ENCODE measurements at regions of chr16 and their contacts with region 1.

Region 1: GRCh38 chr16:30407102-30407803 is at the start of gene ZNF771:
- DNase-seq: peak; percentile 66 to 93 (median 69)
- ATAC-seq: peak; percentile 93
- H3K4me3 ChIP-seq: peak within 1 kb of the TSS; percentile 85
- H3K4me3 Mint-ChIP-seq: peak within 1 kb of the TSS; percentile 87 to 100 (median 97)
- H3K27ac ChIP-seq: peak within 1 kb of the TSS; percentile 74
- H3K27ac Mint-ChIP-seq: peak within 1 kb of the TSS; percentile 83 to 97 (median 95)
- H3K4me1 ChIP-seq: peaks cover 0 to 12% of the 10 kb centered on the region in 2 donors
- H3K4me1 Mint-ChIP-seq: peaks cover 21 to 31% (median 27%) of the 10 kb centered on the region in 7 donors
- H3K27me3 ChIP-seq: no peaks in the 10 kb centered on the region
- H3K27me3 Mint-ChIP-seq: peaks cover 0 to 4% (median 0%) of the 10 kb centered on the region in 5 donors
- total RNA-seq, gene ZNF771: 1.2 to 9.0 (median 4.5) TPM

Region 2: DNA sequence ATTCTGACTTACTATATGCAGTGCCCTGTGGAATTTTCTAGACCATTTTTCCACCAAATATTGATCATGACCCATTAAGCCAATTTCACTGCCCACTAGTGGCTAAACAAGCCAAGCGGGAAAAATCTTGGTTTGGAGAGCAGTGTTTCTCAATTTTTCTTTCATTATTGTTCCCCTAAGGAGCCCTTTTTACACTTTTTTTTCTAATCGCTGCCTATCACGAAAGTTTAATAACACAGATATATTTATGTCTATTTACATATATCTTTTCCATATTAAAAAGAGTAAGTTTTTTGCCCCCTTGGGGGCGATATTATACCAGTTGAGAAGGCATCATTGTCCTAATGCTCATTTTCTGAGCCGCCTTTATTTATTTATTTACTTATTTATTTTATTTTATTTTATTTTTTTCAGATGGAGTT is 365.4 kb before region 1 on chr16:
- CTCF ChIA-PET with region 1: interaction called, 3 read pairs
- POLR2A ChIA-PET with region 1: no interaction called
- intact Hi-C with region 1: loop called in 1 of 2 experiments (anchors 1 kb)
- DNase-seq: peak in 3 of 9 donors; percentile 40 to 44 (median 42)
- ATAC-seq: no peak
- H3K4me3 ChIP-seq: no peak overlapping the region
- H3K4me3 Mint-ChIP-seq: no peak overlapping the region
- H3K27ac ChIP-seq: no peak overlapping the region
- H3K27ac Mint-ChIP-seq: no peak overlapping the region
- H3K4me1 ChIP-seq: no peaks in the 10 kb centered on the region
- H3K4me1 Mint-ChIP-seq: peaks cover 0 to 7% (median 0%) of the 10 kb centered on the region in 7 donors
- H3K27me3 ChIP-seq: no peaks in the 10 kb centered on the region
- H3K27me3 Mint-ChIP-seq: peaks cover 0 to 21% (median 0%) of the 10 kb centered on the region in 5 donors

Region 3: GRCh38 chr16:30112197-30113030 is 294.8 kb before region 1 on chr16:
- CTCF ChIA-PET with region 1: no interaction called
- POLR2A ChIA-PET with region 1: interaction called, 3 read pairs
- intact Hi-C with region 1: loop called in 1 of 2 experiments (anchors 1 kb)
- DNase-seq: peak in 7 of 9 donors; percentile 31 to 76 (median 35)
- ATAC-seq: peak; percentile 60
- H3K4me3 ChIP-seq: no peak overlapping the region
- H3K4me3 Mint-ChIP-seq: no peak overlapping the region
- H3K27ac ChIP-seq: no peak overlapping the region
- H3K27ac Mint-ChIP-seq: peak overlapping the region in 2 of 9 donors; percentile 12 to 38
- H3K4me1 ChIP-seq: no peaks in the 10 kb centered on the region
- H3K4me1 Mint-ChIP-seq: peaks cover 6 to 15% (median 11%) of the 10 kb centered on the region in 7 donors
- H3K27me3 ChIP-seq: no peaks in the 10 kb centered on the region
- H3K27me3 Mint-ChIP-seq: no peaks in the 10 kb centered on the region

Region 4: DNA sequence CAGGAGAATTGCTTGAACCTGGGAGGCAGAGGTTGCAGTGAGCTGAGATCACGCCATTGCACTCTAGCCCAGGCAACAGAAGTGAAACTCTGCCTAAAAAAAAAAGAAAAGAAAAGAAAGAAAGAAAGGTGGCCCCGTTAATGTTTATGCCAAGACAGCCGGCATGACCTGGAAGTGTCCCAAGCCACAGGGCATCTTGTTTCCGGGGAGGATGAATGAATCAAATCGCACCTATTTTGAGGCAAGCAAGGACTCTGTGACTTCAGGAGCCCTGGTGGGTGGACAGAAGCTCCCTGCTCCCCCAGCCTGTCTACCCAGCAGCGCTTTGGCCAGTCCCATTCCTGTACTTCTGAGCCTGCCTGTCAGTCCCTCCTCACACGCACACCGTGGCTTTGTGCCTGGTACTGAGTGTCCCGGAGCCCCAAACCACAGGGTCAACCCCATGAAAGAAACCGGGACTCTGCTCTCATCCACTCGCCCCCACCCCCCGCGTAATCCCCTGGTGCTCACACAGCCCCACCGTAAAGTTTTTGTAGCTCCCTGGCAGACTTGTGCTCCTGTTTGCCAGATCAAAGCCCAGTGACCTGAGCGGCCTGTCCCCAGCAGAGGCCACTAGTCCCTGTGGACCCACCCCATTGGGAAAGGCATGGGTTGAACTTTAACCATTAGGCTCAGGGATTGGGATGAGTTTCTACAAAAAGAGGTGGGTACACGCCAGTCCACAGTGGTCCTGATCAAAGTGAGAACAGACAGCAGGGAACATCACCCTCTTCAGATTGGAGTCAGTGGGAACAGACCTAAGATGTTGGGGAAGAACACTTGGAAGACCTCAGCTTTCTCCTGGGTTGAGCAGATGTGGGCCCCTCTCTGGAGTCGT is 71.4 kb before region 1 on chr16:
- CTCF ChIA-PET with region 1: interaction called, 5 read pairs
- POLR2A ChIA-PET with region 1: interaction called, 4 read pairs
- intact Hi-C with region 1: loop called (anchors 1 to 2 kb)
- DNase-seq: peak in 1 of 9 donors; percentile 26
- ATAC-seq: no peak
- H3K4me3 ChIP-seq: peak overlapping the region; percentile 50
- H3K4me3 Mint-ChIP-seq: peak overlapping the region; percentile 80 to 96 (median 87)
- H3K27ac ChIP-seq: peak overlapping the region; percentile 74
- H3K27ac Mint-ChIP-seq: peak overlapping the region; percentile 57 to 91 (median 81)
- H3K4me1 ChIP-seq: peaks cover 7% of the 10 kb centered on the region in 2 donors
- H3K4me1 Mint-ChIP-seq: peaks cover 3 to 30% (median 17%) of the 10 kb centered on the region in 7 donors
- H3K27me3 ChIP-seq: no peaks in the 10 kb centered on the region
- H3K27me3 Mint-ChIP-seq: no peaks in the 10 kb centered on the region

Region 5: GRCh38 chr16:30370444-30371247 is 36.6 kb before region 1 on chr16 and contains the start of gene TBC1D10B:
- CTCF ChIA-PET with region 1: interaction called, 11 read pairs
- POLR2A ChIA-PET with region 1: interaction called, 45 read pairs
- intact Hi-C with region 1: loop called (anchors 1 kb)
- DNase-seq: peak; percentile 89 to 100 (median 100)
- ATAC-seq: peak; percentile 91
- H3K4me3 ChIP-seq: peak within 1 kb of the TSS; percentile 76
- H3K4me3 Mint-ChIP-seq: peak within 1 kb of the TSS; percentile 83 to 92 (median 89)
- H3K27ac ChIP-seq: peak within 1 kb of the TSS; percentile 80
- H3K27ac Mint-ChIP-seq: peak within 1 kb of the TSS; percentile 63 to 98 (median 93)
- H3K4me1 ChIP-seq: peaks cover 24 to 25% of the 10 kb centered on the region in 2 donors
- H3K4me1 Mint-ChIP-seq: peaks cover 42 to 54% (median 50%) of the 10 kb centered on the region in 7 donors
- H3K27me3 ChIP-seq: no peaks in the 10 kb centered on the region
- H3K27me3 Mint-ChIP-seq: peaks cover 0 to 3% (median 0%) of the 10 kb centered on the region in 5 donors
- total RNA-seq, gene TBC1D10B: 23.2 to 70.0 (median 45.2) TPM

Region 6: GRCh38 chr16:30395155-30395991 is 11.9 kb before region 1 on chr16 and contains the start of gene ZNF48:
- CTCF ChIA-PET with region 1: interaction called, 4 read pairs
- POLR2A ChIA-PET with region 1: interaction called, 40 read pairs
- intact Hi-C with region 1: loop called (anchors 1 kb)
- DNase-seq: peak; percentile 33 to 72 (median 45)
- ATAC-seq: peak; percentile 80
- H3K4me3 ChIP-seq: peak within 1 kb of the TSS; percentile 80
- H3K4me3 Mint-ChIP-seq: peak within 1 kb of the TSS; percentile 85 to 92 (median 88)
- H3K27ac ChIP-seq: peak within 1 kb of the TSS; percentile 71
- H3K27ac Mint-ChIP-seq: peak within 1 kb of the TSS; percentile 69 to 95 (median 83)
- H3K4me1 ChIP-seq: peaks cover 14 to 22% of the 10 kb centered on the region in 2 donors
- H3K4me1 Mint-ChIP-seq: peaks cover 23 to 39% (median 32%) of the 10 kb centered on the region in 7 donors
- H3K27me3 ChIP-seq: no peaks in the 10 kb centered on the region
- H3K27me3 Mint-ChIP-seq: no peaks in the 10 kb centered on the region
- total RNA-seq, gene ZNF48: 6.0 to 16.0 (median 15.6) TPM

Region 7: GRCh38 chr16:30458561-30459394 is 51.5 kb after region 1 on chr16:
- CTCF ChIA-PET with region 1: no interaction called
- POLR2A ChIA-PET with region 1: no interaction called
- intact Hi-C with region 1: no loop called
- DNase-seq: peak; percentile 41 to 90 (median 58)
- ATAC-seq: peak; percentile 96
- H3K4me3 ChIP-seq: peak overlapping the region; percentile 31
- H3K4me3 Mint-ChIP-seq: peak overlapping the region; percentile 57 to 81 (median 72)
- H3K27ac ChIP-seq: peak overlapping the region; percentile 57
- H3K27ac Mint-ChIP-seq: peak overlapping the region; percentile 64 to 96 (median 86)
- H3K4me1 ChIP-seq: peaks cover 25% of the 10 kb centered on the region in 2 donors
- H3K4me1 Mint-ChIP-seq: peaks cover 34 to 71% (median 47%) of the 10 kb centered on the region in 7 donors
- H3K27me3 ChIP-seq: no peaks in the 10 kb centered on the region
- H3K27me3 Mint-ChIP-seq: peaks cover 0 to 2% (median 0%) of the 10 kb centered on the region in 5 donors

Region 8: GRCh38 chr16:30503403-30504296 is 96.4 kb after region 1 on chr16:
- CTCF ChIA-PET with region 1: no interaction called
- POLR2A ChIA-PET with region 1: no interaction called
- intact Hi-C with region 1: no loop called
- DNase-seq: no peak
- ATAC-seq: no peak
- H3K4me3 ChIP-seq: no peak overlapping the region
- H3K4me3 Mint-ChIP-seq: no peak overlapping the region
- H3K27ac ChIP-seq: peak overlapping the region; percentile 58
- H3K27ac Mint-ChIP-seq: peak overlapping the region; percentile 36 to 84 (median 63)
- H3K4me1 ChIP-seq: no peaks in the 10 kb centered on the region
- H3K4me1 Mint-ChIP-seq: peaks cover 0 to 19% (median 8%) of the 10 kb centered on the region in 7 donors
- H3K27me3 ChIP-seq: no peaks in the 10 kb centered on the region
- H3K27me3 Mint-ChIP-seq: no peaks in the 10 kb centered on the region

Region 9: GRCh38 chr16:30747799-30748634 is 340.8 kb after region 1 on chr16 and contains the start of gene PHKG2:
- CTCF ChIA-PET with region 1: no interaction called
- POLR2A ChIA-PET with region 1: no interaction called
- intact Hi-C with region 1: loop called in 1 of 2 experiments (anchors 1 kb)
- DNase-seq: peak; percentile 82 to 95 (median 92)
- ATAC-seq: peak; percentile 99
- H3K4me3 ChIP-seq: peak within 1 kb of the TSS; percentile 51
- H3K4me3 Mint-ChIP-seq: peak within 1 kb of the TSS; percentile 78 to 98 (median 90)
- H3K27ac ChIP-seq: peak within 1 kb of the TSS; percentile 75
- H3K27ac Mint-ChIP-seq: peak within 1 kb of the TSS; percentile 82 to 95 (median 90)
- H3K4me1 ChIP-seq: peaks cover 4 to 6% of the 10 kb centered on the region in 2 donors
- H3K4me1 Mint-ChIP-seq: peaks cover 18 to 29% (median 27%) of the 10 kb centered on the region in 7 donors
- H3K27me3 ChIP-seq: no peaks in the 10 kb centered on the region
- H3K27me3 Mint-ChIP-seq: no peaks in the 10 kb centered on the region
- total RNA-seq, gene PHKG2: 33.2 to 57.8 (median 46.7) TPM